ENCODE measurements at regions of chr1 and their contacts with region 1.

Region 1: DNA sequence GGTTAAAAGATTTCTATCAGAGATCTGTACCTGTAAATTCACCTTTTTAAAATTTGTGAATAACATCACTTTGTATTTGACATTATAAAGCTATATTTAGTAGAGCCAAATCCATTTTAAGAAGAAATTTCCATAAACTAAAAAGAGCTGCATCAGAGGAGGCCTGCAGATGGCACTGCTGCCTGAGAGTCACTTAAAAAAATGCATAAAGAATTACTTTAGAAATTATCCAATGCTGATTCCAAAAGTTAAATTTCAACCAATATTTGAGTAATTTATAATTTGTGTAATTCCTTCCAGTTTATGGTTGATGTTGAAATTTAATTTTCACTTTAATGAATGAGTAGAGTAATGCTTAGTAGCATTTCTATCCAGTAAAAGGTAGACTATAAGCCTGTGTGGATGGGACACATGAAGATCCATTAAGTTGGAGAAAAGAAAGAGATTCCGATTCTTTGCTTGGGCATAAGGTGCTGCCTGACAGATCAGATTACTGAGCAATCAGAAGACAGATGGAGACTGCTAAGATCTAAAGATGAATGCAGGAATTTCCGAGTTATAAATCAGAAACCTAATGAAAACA is 20.7 kb upstream of the RPE65 start:
- DNase-seq: no peak
- H3K4me3 ChIP-seq: no peak overlapping the region
- H3K27ac ChIP-seq: no peak overlapping the region
- H3K4me1 ChIP-seq: no peaks in the 10 kb centered on the region
- H3K27me3 ChIP-seq: no peaks in the 10 kb centered on the region
- CTCF ChIP-seq: peak; percentile 41

Region 2: DNA sequence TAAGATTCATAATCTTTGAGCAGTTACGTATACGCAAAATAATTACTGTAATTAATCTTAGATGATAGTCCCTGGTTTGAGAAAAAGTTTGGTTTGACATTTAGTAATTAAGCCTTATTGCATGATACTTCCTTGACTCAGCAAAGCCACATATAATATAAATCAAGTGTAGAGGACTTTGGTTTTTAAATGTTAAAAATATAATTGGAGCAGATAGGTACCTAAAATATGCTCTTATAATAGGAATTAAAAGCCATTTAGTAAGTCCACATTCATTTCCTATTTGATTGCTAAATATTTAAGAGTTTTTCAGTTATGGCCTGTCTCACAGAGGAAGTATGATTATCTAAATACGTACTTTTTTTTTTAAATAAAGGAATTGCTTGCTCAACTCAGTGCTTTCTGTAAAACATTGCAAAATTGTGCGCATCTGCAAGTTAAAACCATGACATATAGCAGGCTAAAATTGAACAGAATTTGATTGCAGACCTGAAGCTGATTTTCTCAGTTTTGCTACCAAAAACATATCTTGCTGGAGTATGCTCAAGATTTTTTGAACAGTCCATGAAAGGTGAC is 41.2 kb before region 1 on chr1:
- intact Hi-C with region 1: no loop called
- DNase-seq: no peak
- H3K4me3 ChIP-seq: no peak overlapping the region
- H3K27ac ChIP-seq: no peak overlapping the region
- H3K4me1 ChIP-seq: no peaks in the 10 kb centered on the region
- H3K27me3 ChIP-seq: no peaks in the 10 kb centered on the region
- CTCF ChIP-seq: no peak

Region 3: GRCh38 chr1:68590473-68590872 is 120.0 kb after region 1 on chr1:
- intact Hi-C with region 1: loop called (anchors 10 kb)
- DNase-seq: no peak
- H3K4me3 ChIP-seq: no peak overlapping the region
- H3K27ac ChIP-seq: no peak overlapping the region
- H3K4me1 ChIP-seq: no peaks in the 10 kb centered on the region
- H3K27me3 ChIP-seq: no peaks in the 10 kb centered on the region
- CTCF ChIP-seq: no peak

Region 4: GRCh38 chr1:68767941-68768340 is 297.5 kb after region 1 on chr1:
- intact Hi-C with region 1: no loop called
- DNase-seq: no peak
- H3K4me3 ChIP-seq: no peak overlapping the region
- H3K27ac ChIP-seq: no peak overlapping the region
- H3K4me1 ChIP-seq: no peaks in the 10 kb centered on the region
- H3K27me3 ChIP-seq: no peaks in the 10 kb centered on the region
- CTCF ChIP-seq: no peak

Region 5: GRCh38 chr1:69737527-69738185 is 1267.2 kb after region 1 on chr1:
- intact Hi-C with region 1: loop called (anchors 5 kb)
- DNase-seq: peak; percentile 27
- H3K4me3 ChIP-seq: no peak overlapping the region
- H3K27ac ChIP-seq: no peak overlapping the region
- H3K4me1 ChIP-seq: no peaks in the 10 kb centered on the region
- H3K27me3 ChIP-seq: no peaks in the 10 kb centered on the region
- CTCF ChIP-seq: peak; percentile 56